Transverse colon (tissue), 4 donors: ENCODE measurements at regions of chr2 and their contacts with region 1.

Region 1: DNA sequence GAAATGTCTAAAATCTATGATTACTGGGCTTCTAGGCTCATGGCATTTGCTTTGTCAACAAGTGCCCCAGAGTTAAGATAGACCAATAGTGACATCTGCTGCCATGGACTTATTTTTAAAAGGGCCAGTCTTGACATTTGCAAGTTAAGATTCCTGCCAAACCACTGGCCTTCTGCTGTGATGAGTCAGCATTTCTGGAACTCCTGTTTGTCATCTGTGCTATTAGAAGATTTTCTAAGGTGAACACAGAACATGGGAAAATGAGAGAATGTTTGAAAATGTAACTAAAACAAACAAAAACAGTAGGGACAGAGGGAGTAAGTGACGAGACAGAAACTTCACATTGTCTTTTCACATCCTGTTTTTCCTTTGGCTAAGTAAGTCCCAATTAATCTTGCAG is 93.7 kb upstream of the WDR75 start:
- DNase-seq: peak; percentile 19
- H3K4me3 ChIP-seq: no peak overlapping the region
- H3K27ac ChIP-seq: peak overlapping the region; percentile 59 to 75 (median 70)
- H3K4me1 ChIP-seq: peaks cover 2 to 31% (median 13%) of the 10 kb centered on the region in 4 donors
- H3K27me3 ChIP-seq: no peaks in the 10 kb centered on the region
- CTCF ChIP-seq: no peak
- EP300 ChIP-seq: no peak
- POLR2A ChIP-seq: no peak

Region 2: GRCh38 chr2:189129971-189130370 is 217.6 kb before region 1 on chr2:
- in situ Hi-C with region 1: no loop called
- intact Hi-C with region 1: no loop called
- DNase-seq: no peak
- H3K4me3 ChIP-seq: no peak overlapping the region
- H3K27ac ChIP-seq: no peak overlapping the region
- H3K4me1 ChIP-seq: peaks cover 0 to 14% (median 0%) of the 10 kb centered on the region in 4 donors
- H3K27me3 ChIP-seq: no peaks in the 10 kb centered on the region
- CTCF ChIP-seq: no peak
- EP300 ChIP-seq: no peak
- POLR2A ChIP-seq: no peak

Region 3: DNA sequence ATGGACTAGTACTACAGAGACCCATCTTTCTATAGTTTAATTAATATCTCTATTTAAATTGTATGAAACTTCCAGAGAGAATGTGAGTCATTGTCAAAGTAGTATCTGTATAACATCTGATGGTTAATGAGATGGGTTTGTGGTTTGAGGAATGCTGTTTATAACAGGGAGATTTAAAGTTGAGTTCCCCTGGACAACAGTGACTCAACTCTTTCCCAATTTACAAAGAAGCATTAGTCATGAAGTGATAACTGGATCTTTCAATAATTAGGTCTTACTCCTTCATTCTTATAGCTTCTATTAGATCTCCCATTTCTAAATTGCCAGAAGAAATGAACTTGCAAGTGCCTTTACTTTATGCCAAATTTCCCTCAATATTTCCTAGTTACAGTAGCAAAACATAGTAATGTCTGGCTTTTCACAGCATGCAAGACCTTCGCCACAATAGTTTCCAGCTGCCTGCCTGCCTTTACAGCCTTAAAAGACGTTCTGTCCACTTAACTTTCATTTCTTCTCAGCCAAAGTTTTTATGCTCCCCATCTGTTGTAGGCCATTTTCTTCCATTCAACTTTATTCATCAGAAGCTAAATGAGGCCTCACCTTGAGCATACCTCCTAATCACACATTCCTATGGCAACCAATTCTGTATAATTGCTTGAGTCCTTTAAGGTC is 46.0 kb after region 1 on chr2:
- in situ Hi-C with region 1: no loop called
- intact Hi-C with region 1: loop called (anchors 10 kb)
- DNase-seq: no peak
- H3K4me3 ChIP-seq: no peak overlapping the region
- H3K27ac ChIP-seq: peak overlapping the region; percentile 67 to 81 (median 74)
- H3K4me1 ChIP-seq: peaks cover 0 to 24% (median 12%) of the 10 kb centered on the region in 4 donors
- H3K27me3 ChIP-seq: no peaks in the 10 kb centered on the region
- CTCF ChIP-seq: no peak
- EP300 ChIP-seq: no peak
- POLR2A ChIP-seq: no peak

Region 4: DNA sequence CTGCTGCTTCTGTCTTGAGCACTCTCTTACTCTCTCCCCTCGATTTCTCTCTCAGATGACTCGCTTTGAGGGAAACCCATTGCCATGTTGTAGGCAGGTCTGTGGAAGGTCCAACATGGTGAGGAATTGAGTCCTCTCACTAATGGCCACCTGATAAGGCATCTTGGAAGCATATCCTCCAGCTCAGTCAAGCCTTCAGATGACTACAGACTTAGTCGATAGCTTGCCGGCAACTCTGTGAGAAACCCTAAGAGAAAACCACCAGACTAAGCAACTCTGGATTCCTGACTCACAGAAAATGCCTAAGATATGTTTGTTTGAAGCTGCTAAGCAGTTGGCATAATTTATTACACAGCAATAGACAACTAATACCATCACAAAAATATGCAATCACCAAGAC is 144.9 kb after region 1 on chr2:
- in situ Hi-C with region 1: no loop called
- intact Hi-C with region 1: no loop called
- DNase-seq: no peak
- H3K4me3 ChIP-seq: no peak overlapping the region
- H3K27ac ChIP-seq: no peak overlapping the region
- H3K4me1 ChIP-seq: no peaks in the 10 kb centered on the region
- H3K27me3 ChIP-seq: no peaks in the 10 kb centered on the region
- CTCF ChIP-seq: no peak
- EP300 ChIP-seq: no peak
- POLR2A ChIP-seq: no peak